CD4-positive, alpha-beta T cell (primary cell): ENCODE measurements at regions of chr4 and their contacts with region 1.

Region 1: DNA sequence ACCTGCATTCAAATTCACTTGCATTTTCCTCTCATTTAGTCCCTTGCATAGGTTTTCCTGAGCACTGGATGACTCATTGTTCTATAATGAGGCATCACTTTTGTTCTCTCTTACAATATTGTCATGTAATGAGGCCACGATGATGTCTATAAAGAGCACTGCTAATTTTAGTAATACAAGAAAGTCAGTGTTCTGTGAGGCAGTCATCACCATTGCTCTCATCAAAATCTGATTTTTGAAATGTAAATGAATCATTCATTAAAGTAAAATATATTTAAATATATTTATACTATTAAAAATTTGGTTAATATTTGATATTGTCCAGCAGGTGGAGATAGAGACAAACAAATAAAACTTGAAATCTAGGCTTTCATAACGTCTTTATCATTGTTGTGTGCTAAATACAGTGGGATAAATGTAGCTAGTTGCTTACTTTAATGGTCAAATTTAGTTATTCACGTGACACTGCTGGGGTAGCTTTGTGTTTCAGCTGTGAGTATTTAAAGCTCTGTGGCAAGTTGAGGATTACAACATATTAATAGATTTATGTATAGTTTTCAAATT is 15.4 kb downstream of the HMGB2 start:
- DNase-seq: peak in 3 of 14 experiments; percentile 57 to 66 (median 59)
- ATAC-seq: peak; percentile 37
- H3K4me3 ChIP-seq: no peak overlapping the region
- H3K4me3 Mint-ChIP-seq: no peak overlapping the region
- H3K27ac ChIP-seq: no peak overlapping the region
- H3K27ac Mint-ChIP-seq: no peak overlapping the region
- H3K4me1 ChIP-seq: no peaks in the 10 kb centered on the region
- H3K4me1 Mint-ChIP-seq: no peaks in the 10 kb centered on the region
- H3K27me3 ChIP-seq: no peaks in the 10 kb centered on the region
- H3K27me3 Mint-ChIP-seq: no peaks in the 10 kb centered on the region
- CTCF ChIP-seq: peak; percentile 81

Region 2: DNA sequence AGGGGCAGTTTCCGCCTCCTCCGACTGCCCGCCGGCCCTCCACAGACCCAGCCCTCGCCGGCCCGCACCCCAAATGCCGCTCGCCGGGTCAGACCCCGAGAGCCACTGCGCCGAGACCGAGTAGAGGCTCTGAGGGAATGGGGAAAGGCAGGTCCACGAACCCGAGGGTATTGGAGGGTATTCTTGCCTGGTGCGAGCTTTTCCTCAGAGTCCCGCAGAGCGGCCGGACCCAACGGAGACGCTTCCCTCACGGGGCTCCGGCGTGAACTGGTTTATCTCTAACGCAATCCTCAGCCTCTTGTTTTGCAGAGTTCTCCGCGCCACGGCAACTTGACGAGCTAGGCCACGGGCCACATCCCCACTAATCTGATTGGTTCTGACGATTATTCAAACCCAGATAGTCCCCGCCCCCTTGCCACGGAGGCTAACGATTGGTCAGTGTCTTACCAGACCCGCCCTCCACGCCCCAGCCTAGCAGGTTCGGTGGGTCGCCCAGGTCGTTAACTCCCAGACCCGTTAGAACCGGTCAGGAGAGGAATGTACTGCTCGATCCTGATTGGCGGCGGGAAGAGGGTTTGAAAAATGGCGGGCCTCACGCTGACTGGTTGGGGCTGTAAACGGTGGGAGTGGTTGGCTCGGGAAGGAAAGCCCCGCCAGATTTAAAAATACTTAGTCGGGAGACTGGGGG is 15.5 kb after region 1 on chr4 and contains the start of gene HMGB2:
- CTCF ChIA-PET with region 1: interaction called, 3 read pairs
- POLR2A ChIA-PET with region 1: interaction called, 17 read pairs
- intact Hi-C with region 1: no loop called
- DNase-seq: peak; percentile 99 to 100 (median 100)
- ATAC-seq: peak; percentile 92
- H3K4me3 ChIP-seq: peak within 1 kb of the TSS; percentile 88
- H3K4me3 Mint-ChIP-seq: peak within 1 kb of the TSS; percentile 98
- H3K27ac ChIP-seq: peak within 1 kb of the TSS; percentile 78 to 93
- H3K27ac Mint-ChIP-seq: peak within 1 kb of the TSS; percentile 96
- H3K4me1 ChIP-seq: peaks cover 16% of the 10 kb centered on the region
- H3K4me1 Mint-ChIP-seq: peaks cover 37% of the 10 kb centered on the region
- H3K27me3 ChIP-seq: no peaks in the 10 kb centered on the region
- H3K27me3 Mint-ChIP-seq: peaks cover 13% of the 10 kb centered on the region
- CTCF ChIP-seq: no peak
- total RNA-seq, gene HMGB2: 228 to 232 TPM

Region 3: DNA sequence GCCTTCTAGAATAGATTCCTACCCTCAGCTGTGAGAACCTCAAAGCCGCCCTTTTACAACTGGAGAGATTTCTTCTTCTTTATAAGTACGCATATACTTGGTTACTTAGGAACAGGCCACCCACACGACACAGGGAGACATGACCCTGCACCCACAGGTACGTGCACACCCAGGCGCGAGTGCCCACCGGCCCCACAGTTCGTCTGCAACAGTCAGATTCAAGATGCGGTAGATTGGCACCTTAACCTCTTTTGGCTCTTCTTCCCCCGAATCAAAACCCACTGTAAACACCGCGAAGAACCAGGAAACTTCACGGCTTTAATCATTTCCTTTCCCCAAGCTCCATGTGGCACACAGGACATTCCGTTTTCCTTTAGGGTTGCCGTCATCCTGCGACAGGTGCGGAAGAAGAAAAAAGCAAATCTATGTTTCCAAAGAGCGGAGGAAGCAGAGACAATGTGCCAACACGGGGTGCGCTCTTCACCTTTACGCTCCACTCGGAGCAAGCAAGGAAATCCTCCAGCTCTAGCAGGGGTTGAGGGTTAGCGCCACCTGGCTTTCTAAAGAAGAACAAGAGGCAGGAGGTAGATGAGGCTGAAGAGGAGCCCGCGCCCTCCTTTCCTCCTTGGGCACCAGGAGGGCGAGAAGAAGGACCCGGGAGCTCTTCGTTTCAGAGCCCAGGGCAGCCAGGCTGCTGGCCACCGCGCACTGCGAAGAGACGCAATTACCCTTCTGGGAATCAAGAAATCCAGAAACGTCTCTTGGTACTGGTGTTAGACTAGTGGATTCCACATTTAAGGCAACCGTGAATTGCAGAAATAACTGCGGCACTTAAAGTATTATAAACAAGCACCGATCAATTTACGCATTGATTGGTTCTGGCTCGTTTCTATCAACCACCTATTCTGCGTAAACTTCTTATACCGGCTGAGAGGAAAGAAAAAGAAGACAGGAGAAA is 175.6 kb after region 1 on chr4:
- CTCF ChIA-PET with region 1: no interaction called
- POLR2A ChIA-PET with region 1: interaction called, 3 read pairs
- intact Hi-C with region 1: loop called (anchors 2 to 5 kb)
- DNase-seq: peak in 13 of 14 experiments; percentile 17 to 84 (median 40)
- ATAC-seq: peak; percentile 98
- H3K4me3 ChIP-seq: peak overlapping the region; percentile 53
- H3K4me3 Mint-ChIP-seq: peak overlapping the region; percentile 85
- H3K27ac ChIP-seq: no peak overlapping the region
- H3K27ac Mint-ChIP-seq: no peak overlapping the region
- H3K4me1 ChIP-seq: peaks cover 9% of the 10 kb centered on the region
- H3K4me1 Mint-ChIP-seq: peaks cover 22% of the 10 kb centered on the region
- H3K27me3 ChIP-seq: peaks cover 8 to 24% of the 10 kb centered on the region in 2 experiments
- H3K27me3 Mint-ChIP-seq: peaks cover 65% of the 10 kb centered on the region
- CTCF ChIP-seq: peak; percentile 68

Region 4: GRCh38 chr4:174120446-174121295 is 801.9 kb after region 1 on chr4:
- CTCF ChIA-PET with region 1: no interaction called
- POLR2A ChIA-PET with region 1: no interaction called
- intact Hi-C with region 1: loop called (anchors 10 kb)
- DNase-seq: peak in 4 of 14 experiments; percentile 15 to 43 (median 35)
- ATAC-seq: no peak
- H3K4me3 ChIP-seq: no peak overlapping the region
- H3K4me3 Mint-ChIP-seq: no peak overlapping the region
- H3K27ac ChIP-seq: no peak overlapping the region
- H3K27ac Mint-ChIP-seq: no peak overlapping the region
- H3K4me1 ChIP-seq: peaks cover 3% of the 10 kb centered on the region
- H3K4me1 Mint-ChIP-seq: peaks cover 11% of the 10 kb centered on the region
- H3K27me3 ChIP-seq: peaks cover 4 to 24% of the 10 kb centered on the region in 2 experiments
- H3K27me3 Mint-ChIP-seq: peaks cover 66% of the 10 kb centered on the region
- CTCF ChIP-seq: no peak

Region 5: DNA sequence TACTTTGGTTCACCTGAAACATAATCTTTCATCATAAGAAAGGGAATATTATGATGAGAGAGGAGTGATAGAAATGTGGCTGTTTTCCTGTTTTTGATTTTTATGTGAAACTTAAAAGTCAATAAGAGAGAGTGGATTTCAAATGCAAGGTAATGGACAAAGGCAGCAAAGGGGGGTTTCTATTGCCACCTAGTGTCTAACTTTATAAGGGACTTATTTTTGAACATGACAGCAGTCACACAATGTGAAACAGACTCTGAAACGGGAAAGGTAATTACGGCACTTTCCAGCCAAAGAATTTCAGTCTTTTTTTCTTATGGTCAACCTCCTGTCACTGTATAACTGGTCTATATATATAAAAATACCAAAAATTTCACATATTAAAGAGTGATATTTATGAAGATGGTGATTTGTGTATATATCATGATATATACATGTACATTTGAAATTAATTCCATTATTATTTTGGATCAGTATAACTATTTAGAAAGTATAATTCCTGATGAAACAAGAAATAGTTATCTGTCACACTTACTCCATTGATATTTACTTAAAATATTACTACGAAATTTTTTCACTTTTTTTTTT is 837.6 kb after region 1 on chr4:
- CTCF ChIA-PET with region 1: no interaction called
- POLR2A ChIA-PET with region 1: no interaction called
- intact Hi-C with region 1: loop called in 1 of 2 experiments (anchors 10 kb)
- DNase-seq: peak in 3 of 14 experiments; percentile 18 to 30 (median 26)
- ATAC-seq: no peak
- H3K4me3 ChIP-seq: no peak overlapping the region
- H3K4me3 Mint-ChIP-seq: no peak overlapping the region
- H3K27ac ChIP-seq: no peak overlapping the region
- H3K27ac Mint-ChIP-seq: no peak overlapping the region
- H3K4me1 ChIP-seq: no peaks in the 10 kb centered on the region
- H3K4me1 Mint-ChIP-seq: no peaks in the 10 kb centered on the region
- H3K27me3 ChIP-seq: peaks cover 0 to 11% of the 10 kb centered on the region in 2 experiments
- H3K27me3 Mint-ChIP-seq: peaks cover 50% of the 10 kb centered on the region
- CTCF ChIP-seq: peak; percentile 62

Region 6: GRCh38 chr4:174318829-174319764 is 1000.4 kb after region 1 on chr4:
- CTCF ChIA-PET with region 1: no interaction called
- POLR2A ChIA-PET with region 1: no interaction called
- intact Hi-C with region 1: loop called in 1 of 2 experiments (anchors 5 kb)
- DNase-seq: peak in 3 of 14 experiments; percentile 47 to 62 (median 52)
- ATAC-seq: no peak
- H3K4me3 ChIP-seq: no peak overlapping the region
- H3K4me3 Mint-ChIP-seq: no peak overlapping the region
- H3K27ac ChIP-seq: no peak overlapping the region
- H3K27ac Mint-ChIP-seq: no peak overlapping the region
- H3K4me1 ChIP-seq: no peaks in the 10 kb centered on the region
- H3K4me1 Mint-ChIP-seq: no peaks in the 10 kb centered on the region
- H3K27me3 ChIP-seq: no peaks in the 10 kb centered on the region
- H3K27me3 Mint-ChIP-seq: no peaks in the 10 kb centered on the region
- CTCF ChIP-seq: peak; percentile 83